ENCODE measurements at regions of chr5 and their contacts with region 1.

Region 1: GRCh38 chr5:143693651-143694252 is 118.2 kb upstream of the HMHB1 start:
- DNase-seq: no peak
- H3K4me3 ChIP-seq: no peak overlapping the region
- H3K27ac ChIP-seq: no peak overlapping the region
- H3K4me1 ChIP-seq: no peaks in the 10 kb centered on the region
- H3K27me3 ChIP-seq: no peaks in the 10 kb centered on the region
- CTCF ChIP-seq: no peak

Region 2: GRCh38 chr5:143495821-143496275 is 197.9 kb before region 1 on chr5:
- CTCF ChIA-PET with region 1: no interaction called
- POLR2A ChIA-PET with region 1: no interaction called
- intact Hi-C with region 1: no loop called
- DNase-seq: peak in 1 of 2 experiments; percentile 58
- H3K4me3 ChIP-seq: no peak overlapping the region
- H3K27ac ChIP-seq: peak overlapping the region; percentile 77
- H3K4me1 ChIP-seq: peaks cover 34% of the 10 kb centered on the region
- H3K27me3 ChIP-seq: no peaks in the 10 kb centered on the region
- CTCF ChIP-seq: no peak

Region 3: DNA sequence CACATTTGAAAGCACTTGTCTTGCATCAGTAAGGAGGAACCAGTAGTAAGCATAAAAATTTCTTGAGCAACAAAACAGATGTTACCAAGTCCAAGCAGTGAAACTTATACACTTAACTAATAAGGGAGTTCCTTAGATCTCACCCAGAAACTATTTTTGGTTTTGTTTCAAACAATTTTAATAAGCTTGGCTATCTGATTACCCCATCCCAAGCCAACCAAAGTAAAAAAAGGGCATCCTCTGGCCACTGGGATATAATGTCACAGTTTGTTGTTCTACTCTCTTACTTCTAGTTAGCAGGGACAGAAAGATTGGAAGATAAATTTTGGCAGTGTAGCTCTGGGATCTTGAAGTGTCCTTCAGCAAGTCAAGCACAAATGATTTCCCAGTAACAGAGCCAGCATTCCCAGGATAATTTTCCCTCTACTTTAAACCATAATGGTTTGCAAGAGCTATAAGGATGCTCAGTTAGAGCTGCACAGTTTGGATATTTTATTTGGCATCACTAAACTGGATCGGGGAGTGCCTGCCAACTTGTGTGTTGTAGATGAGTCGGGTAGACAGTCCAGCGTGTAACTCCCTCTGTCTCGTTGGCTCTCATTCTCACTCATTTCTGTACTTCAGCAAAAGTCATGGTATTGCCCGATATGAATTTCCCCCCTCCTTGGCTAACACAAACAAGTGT is 43.7 kb before region 1 on chr5:
- CTCF ChIA-PET with region 1: no interaction called
- POLR2A ChIA-PET with region 1: interaction called, 17 read pairs
- intact Hi-C with region 1: no loop called
- DNase-seq: no peak
- H3K4me3 ChIP-seq: no peak overlapping the region
- H3K27ac ChIP-seq: no peak overlapping the region
- H3K4me1 ChIP-seq: peaks cover 16% of the 10 kb centered on the region
- H3K27me3 ChIP-seq: no peaks in the 10 kb centered on the region
- CTCF ChIP-seq: no peak